ENCODE measurements at regions of chr2 and their contacts with region 1.

Region 1: DNA sequence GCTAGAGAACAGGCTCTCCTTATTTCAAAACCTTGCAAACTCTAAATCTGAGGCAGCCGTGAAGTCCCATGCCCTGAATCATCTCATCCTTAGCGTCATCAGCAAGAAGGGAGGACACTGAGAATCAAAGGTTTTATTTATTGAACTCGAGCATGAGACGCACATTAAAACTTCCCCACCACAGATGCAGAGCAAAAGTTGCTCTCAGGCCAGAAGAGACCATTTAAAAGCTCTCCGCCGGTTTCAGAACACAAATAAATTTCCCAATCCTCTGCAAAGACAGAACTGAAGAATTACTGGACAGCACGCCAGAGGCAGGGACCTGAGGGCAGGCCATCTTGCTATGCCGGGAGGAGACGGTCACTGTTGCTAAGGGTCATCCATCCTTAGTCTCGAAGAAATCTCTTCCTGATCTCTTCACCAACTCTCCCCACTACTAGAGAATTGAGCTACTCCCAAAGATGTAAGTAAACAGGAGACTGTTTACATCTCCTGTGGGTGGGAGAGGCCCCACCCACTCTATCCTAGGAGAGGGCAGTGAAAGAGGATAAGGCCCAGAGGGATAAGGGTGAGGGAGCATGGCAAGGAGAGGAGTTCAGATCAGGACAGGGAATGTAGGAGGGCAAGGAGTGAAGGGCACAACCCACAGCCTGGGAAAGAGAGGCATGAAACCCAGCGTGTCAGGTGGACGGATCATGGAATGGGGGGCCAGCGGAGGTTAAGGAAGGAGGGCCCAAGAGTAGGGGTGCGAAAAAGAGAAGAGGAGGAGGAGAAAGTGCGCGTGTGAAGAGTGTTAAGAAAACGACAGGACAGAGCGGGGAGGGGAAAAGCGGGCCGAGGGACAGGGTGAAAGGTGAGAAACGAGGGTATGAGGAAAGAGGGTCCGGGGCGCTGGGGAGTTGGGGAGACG is 1.1 kb downstream of the AMMECR1L start:
- DNase-seq: peak; percentile 31
- ATAC-seq: peak; percentile 2; the same call in 1 of the 2 replicates
- H3K4me3 ChIP-seq: peak overlapping the region; percentile 77
- H3K27ac ChIP-seq: peak overlapping the region; percentile 57
- H3K4me1 ChIP-seq: peaks cover 31% of the 10 kb centered on the region
- H3K27me3 ChIP-seq: no peaks in the 10 kb centered on the region
- CTCF ChIP-seq: no peak

Region 2: DNA sequence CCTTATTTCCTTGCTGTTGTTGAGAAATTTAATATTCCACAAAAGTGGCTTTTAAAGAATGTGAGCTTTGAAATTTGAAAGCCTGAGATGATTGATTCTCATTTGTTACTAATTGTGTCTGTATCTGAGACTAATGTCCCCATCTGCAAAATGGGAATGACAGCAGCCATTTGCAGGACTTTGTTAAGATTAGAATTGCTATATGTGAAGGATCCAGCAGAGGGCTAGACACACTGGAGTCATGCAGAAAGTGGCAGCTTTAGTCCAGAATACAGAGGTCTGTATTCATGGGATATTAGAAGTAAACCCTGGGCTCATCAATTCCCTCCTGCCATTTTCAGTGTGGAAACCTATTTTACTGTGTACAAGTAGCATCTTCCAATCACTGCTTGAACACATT is 1525.2 kb before region 1 on chr2:
- CTCF ChIA-PET with region 1: no interaction called
- POLR2A ChIA-PET with region 1: no interaction called
- intact Hi-C with region 1: no loop called
- DNase-seq: no peak
- ATAC-seq: no peak
- H3K4me3 ChIP-seq: no peak overlapping the region
- H3K27ac ChIP-seq: no peak overlapping the region
- H3K4me1 ChIP-seq: no peaks in the 10 kb centered on the region
- H3K27me3 ChIP-seq: no peaks in the 10 kb centered on the region
- CTCF ChIP-seq: 0 out of 2 replicates have a peak, but pooled peaks have one; percentile 24

Region 3: DNA sequence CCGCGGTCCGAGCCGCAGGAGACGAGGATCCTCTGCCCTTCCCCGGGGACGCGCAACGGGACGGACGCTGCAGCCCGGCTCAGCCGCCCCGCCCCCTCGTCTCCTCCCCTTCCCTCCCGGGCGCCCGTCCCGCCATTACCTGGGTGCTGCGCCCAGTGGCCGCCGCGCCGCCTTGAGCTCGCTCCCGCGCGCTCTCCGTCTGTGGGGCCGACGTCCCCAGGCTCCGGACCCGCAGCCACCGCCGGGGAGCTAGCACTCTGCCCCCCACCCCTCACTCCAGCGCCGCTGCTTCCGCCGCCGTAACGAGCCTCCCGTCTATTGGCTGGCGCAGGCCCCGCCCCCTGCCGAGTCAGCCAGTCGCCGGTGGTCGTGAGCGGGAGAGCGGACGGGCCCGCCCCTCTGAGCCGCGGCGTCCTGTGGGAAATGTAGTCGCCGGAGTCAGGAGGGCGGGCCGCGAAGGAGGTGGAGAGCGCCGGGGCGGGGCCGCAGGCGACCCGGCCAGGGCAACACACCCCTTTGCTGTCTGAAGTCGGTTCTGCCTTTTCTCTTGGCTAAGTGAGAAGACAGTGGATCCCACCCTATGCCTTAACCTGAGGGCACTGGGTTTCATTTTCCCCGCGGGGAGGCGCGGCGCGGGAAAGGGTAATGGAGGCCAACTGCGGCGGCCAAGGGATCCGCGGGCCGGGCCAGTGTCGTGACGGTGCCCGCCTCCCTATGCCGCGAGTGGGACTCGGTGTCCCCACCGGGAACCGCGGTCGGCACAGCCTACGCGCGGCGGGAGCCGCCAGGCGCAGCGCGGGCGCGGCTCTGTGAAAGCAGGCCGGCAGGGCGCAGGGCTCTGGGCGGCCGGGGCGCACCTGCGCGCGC is 143.3 kb after region 1 on chr2 and contains the start of gene SAP130:
- CTCF ChIA-PET with region 1: no interaction called
- POLR2A ChIA-PET with region 1: no interaction called
- intact Hi-C with region 1: loop called (anchors 10 kb)
- DNase-seq: peak; percentile 95
- ATAC-seq: peak; percentile 79
- H3K4me3 ChIP-seq: peak within 1 kb of the TSS; percentile 89
- H3K27ac ChIP-seq: peak within 1 kb of the TSS; percentile 52
- H3K4me1 ChIP-seq: 0 out of 2 replicates have a peak, but pooled peaks cover 11% of the 10 kb centered on the region
- H3K27me3 ChIP-seq: no peaks in the 10 kb centered on the region
- CTCF ChIP-seq: no peak
- total RNA-seq, gene SAP130: 11.1 and 13.0 TPM in 2 replicates